Activated CD8-positive, alpha-beta T cell treated with anti-CD3 and anti-CD28 coated beads, Interleukin-2, amount 10 ng/mL, durations not matched to agents 7 days and 5 days (primary cell): ENCODE measurements at regions of chr10 and their contacts with region 1.

Region 1: GRCh38 chr10:79316671-79317431 is 30.4 kb upstream of the PPIF start:
- DNase-seq: peak; percentile 51
- ATAC-seq: peak; percentile 50
- H3K4me3 Mint-ChIP-seq: peak overlapping the region; percentile 71
- H3K27ac Mint-ChIP-seq: peak overlapping the region; percentile 95
- H3K4me1 Mint-ChIP-seq: peaks cover 65% of the 10 kb centered on the region
- H3K27me3 Mint-ChIP-seq: no peaks in the 10 kb centered on the region

Region 2: DNA sequence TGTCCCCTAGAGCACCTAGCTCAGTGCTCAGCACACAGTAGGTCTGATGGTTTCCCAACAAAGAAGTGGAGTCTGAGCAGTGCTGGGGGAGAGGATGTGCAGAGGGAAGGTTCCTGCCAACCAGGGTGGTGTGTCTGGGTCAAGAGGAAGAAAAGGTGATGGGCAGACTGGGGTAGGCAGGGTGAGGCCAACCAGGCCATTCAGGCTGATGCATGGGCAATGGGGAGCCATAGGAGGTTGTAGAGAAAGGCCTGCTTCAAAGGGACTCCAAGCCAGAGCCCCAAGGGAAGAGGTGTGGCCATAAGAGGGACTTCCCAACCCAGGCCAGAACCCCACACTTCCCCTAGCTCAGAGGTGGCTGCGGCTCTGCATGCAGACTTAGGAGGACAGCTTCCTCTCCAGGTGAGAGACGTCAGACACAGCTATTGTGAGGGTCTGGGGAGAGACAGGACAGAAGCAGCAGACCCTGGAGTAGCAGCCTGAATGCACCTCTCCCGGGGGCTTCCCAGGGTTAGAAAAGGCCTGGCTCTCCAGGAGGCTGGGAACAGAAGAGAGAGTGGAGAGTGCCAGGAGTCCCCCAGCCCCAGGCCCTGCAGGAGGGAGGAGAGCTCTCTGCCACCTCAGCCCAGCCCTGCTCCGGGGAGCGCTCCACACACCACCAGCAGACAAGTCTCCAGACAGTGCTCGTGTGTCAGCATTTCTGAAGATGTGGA is 335.4 kb before region 1 on chr10:
- CTCF ChIA-PET with region 1: no interaction called
- POLR2A ChIA-PET with region 1: no interaction called
- DNase-seq: peak; percentile 60
- ATAC-seq: peak; percentile 77
- H3K4me3 Mint-ChIP-seq: no peak overlapping the region
- H3K27ac Mint-ChIP-seq: peak overlapping the region; percentile 30
- H3K4me1 Mint-ChIP-seq: peaks cover 17% of the 10 kb centered on the region
- H3K27me3 Mint-ChIP-seq: peaks cover 2% of the 10 kb centered on the region

Region 3: DNA sequence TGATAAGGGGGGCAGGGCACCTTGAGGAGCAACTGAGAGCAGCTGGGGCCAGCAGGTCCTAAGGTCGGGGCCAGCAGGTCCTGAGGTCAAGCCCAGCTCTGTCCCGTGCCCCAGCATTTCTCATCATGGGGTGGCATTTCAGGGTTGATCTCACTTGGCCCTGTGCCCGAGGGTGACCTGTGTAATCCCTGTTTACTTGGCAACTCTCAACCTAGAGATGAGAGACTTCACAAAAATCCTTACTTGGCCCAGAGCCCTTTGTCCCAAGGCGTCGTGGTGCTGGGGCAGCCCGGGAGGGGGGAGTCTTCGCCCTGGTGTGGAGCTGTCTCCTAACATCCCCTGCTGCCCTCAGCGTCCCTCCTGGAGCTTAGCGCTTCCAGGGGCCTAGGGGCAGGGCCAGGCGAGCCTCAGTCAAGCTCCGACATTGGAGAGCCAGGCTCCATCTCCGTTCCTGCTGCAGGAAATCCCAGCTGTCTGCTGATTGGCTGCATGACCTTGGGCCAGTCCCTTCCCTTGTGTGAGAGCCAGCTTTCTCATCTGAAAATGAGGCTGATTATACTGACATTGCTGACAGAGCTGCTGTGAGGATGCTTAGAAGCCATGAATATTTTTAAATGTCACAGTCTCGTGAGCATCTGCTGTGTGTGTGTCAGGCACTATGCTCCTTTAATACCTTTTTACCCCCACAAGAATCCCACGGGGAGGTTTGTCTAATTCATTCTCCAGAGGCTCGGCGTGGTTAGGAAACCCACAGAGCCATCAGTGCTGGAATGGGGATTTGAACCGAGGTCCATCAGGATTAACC is 153.8 kb before region 1 on chr10:
- CTCF ChIA-PET with region 1: no interaction called
- POLR2A ChIA-PET with region 1: no interaction called
- DNase-seq: no peak
- ATAC-seq: no peak
- H3K4me3 Mint-ChIP-seq: no peak overlapping the region
- H3K27ac Mint-ChIP-seq: no peak overlapping the region
- H3K4me1 Mint-ChIP-seq: no peaks in the 10 kb centered on the region
- H3K27me3 Mint-ChIP-seq: no peaks in the 10 kb centered on the region

Region 4: DNA sequence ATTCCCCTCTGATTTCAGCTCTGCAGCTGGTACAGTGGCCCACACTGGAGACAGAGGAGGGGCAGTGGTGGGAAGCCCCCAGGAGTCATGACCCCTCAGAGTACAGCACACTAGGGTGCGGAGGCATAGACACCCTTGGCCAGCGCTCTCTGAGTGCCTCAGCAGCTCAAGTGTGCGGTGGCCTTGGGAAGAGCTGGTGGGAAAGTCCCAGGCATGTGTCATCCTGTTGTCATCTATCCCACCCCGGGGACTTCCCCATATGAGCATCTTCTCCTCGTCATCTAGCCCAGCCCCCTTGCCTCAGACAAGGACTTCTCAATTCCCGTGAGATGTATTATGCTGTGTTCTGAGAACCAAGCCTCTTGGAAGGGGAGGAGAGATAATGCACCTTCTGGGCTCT is 14.9 kb after region 1 on chr10:
- CTCF ChIA-PET with region 1: interaction called, 73 read pairs
- POLR2A ChIA-PET with region 1: interaction called, 10 read pairs
- DNase-seq: peak; percentile 60
- ATAC-seq: peak; percentile 75
- H3K4me3 Mint-ChIP-seq: no peak overlapping the region
- H3K27ac Mint-ChIP-seq: peak overlapping the region; percentile 47
- H3K4me1 Mint-ChIP-seq: peaks cover 16% of the 10 kb centered on the region
- H3K27me3 Mint-ChIP-seq: no peaks in the 10 kb centered on the region

Region 5: GRCh38 chr10:79422178-79422892 is 105.5 kb after region 1 on chr10:
- CTCF ChIA-PET with region 1: no interaction called
- POLR2A ChIA-PET with region 1: no interaction called
- DNase-seq: no peak
- ATAC-seq: no peak
- H3K4me3 Mint-ChIP-seq: no peak overlapping the region
- H3K27ac Mint-ChIP-seq: no peak overlapping the region
- H3K4me1 Mint-ChIP-seq: no peaks in the 10 kb centered on the region
- H3K27me3 Mint-ChIP-seq: no peaks in the 10 kb centered on the region